Caco-2 (cell line): ENCODE measurements at regions of chr3 and their contacts with region 1.

Region 1: GRCh38 chr3:150763122-150763841 is at the start of gene SIAH2:
- DNase-seq: peak; percentile 91 to 92
- H3K4me3 ChIP-seq: peak within 1 kb of the TSS; percentile 95
- H3K4me3 Mint-ChIP-seq: peak within 1 kb of the TSS; percentile 89
- H3K27ac Mint-ChIP-seq: peak within 1 kb of the TSS; percentile 96
- H3K4me1 ChIP-seq: peaks cover 35% of the 10 kb centered on the region
- H3K4me1 Mint-ChIP-seq: peaks cover 7% of the 10 kb centered on the region
- H3K27me3 ChIP-seq: no peaks in the 10 kb centered on the region
- H3K27me3 Mint-ChIP-seq: no peaks in the 10 kb centered on the region
- CTCF ChIP-seq: no peak
- total RNA-seq, gene SIAH2: 25.6 and 31.8 TPM in 2 replicates

Region 2: GRCh38 chr3:150703299-150704134 is 59.8 kb before region 1 on chr3 and contains the start of gene ERICH6:
- CTCF ChIA-PET with region 1: interaction called, 3 read pairs
- POLR2A ChIA-PET with region 1: interaction called, 18 read pairs
- intact Hi-C with region 1: no loop called
- DNase-seq: peak; percentile 90 to 93
- H3K4me3 ChIP-seq: peak within 1 kb of the TSS; percentile 52
- H3K4me3 Mint-ChIP-seq: peak within 1 kb of the TSS; percentile 95
- H3K27ac Mint-ChIP-seq: peak within 1 kb of the TSS; percentile 96
- H3K4me1 ChIP-seq: no peaks in the 10 kb centered on the region
- H3K4me1 Mint-ChIP-seq: no peaks in the 10 kb centered on the region
- H3K27me3 ChIP-seq: no peaks in the 10 kb centered on the region
- H3K27me3 Mint-ChIP-seq: peaks cover 3% of the 10 kb centered on the region
- CTCF ChIP-seq: no peak
- total RNA-seq, gene ERICH6: not detected in 2 replicates

Region 3: DNA sequence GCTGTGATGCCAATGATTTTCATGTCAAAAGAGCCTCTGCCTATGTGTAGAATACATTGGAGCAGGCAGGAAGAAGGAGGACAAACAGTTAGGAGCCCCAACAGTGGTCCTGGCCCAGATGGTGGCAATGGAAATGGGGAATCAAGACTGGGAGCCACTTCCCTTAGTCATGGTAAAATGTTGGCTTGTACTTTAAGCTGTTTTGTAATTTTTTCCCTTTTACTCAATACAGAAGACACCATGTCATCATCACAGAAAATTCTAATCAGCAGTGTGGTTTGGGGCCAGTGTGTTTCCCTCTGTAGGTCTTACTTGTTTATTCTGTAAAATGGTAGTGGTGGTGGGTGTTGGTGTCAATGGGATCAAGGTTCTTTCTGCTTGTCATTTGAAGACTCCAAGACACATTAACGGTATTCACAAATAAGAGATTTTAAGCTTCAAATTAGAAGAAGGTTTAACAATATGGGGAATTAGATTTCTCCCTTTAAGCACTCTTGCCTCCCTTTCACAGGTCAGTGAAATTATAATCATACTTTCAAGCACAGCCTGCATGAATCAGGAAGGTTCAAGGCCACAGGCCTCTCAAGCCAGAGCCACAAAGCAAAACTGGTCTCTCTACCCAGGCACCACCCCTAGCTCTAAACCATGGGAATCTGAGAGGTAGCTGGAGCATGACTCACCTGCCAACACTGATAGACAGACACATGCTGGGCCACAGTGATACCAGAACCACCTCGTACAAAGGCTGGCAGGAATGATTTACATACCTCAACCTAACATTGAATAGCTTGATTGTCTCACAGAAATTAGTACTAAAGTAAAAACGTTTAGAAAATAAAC is 25.2 kb before region 1 on chr3:
- CTCF ChIA-PET with region 1: no interaction called
- POLR2A ChIA-PET with region 1: no interaction called
- intact Hi-C with region 1: loop called (anchors 1 kb)
- DNase-seq: no peak
- H3K4me3 ChIP-seq: no peak overlapping the region
- H3K4me3 Mint-ChIP-seq: no peak overlapping the region
- H3K27ac Mint-ChIP-seq: peak overlapping the region; percentile 56
- H3K4me1 ChIP-seq: peaks cover 41% of the 10 kb centered on the region
- H3K4me1 Mint-ChIP-seq: peaks cover 33% of the 10 kb centered on the region
- H3K27me3 ChIP-seq: no peaks in the 10 kb centered on the region
- H3K27me3 Mint-ChIP-seq: no peaks in the 10 kb centered on the region
- CTCF ChIP-seq: no peak

Region 4: DNA sequence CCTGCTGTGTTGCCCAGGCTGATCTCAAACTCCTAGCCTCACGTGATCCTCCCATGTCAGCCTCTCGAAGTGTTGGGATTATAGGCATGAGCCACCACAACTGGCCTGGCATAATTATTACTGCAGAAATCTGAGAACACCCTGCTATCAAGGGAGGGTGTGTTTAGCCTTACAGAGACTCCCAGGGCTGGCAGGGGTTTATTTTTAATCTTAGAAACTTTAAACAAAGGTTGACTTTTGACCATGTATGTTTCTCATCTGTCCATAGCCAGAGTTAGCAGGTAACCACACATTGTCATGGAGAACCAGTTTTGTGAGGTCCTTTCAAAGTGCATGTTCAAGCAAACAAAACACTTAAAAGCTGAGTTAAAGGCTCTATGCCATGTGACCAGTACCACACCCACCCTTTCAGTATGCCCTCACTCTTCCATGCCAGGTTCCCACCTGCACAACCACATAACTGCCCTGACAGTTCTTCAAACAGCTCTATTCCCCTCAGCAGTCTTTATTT is 11.5 kb before region 1 on chr3:
- CTCF ChIA-PET with region 1: interaction called, 3 read pairs
- POLR2A ChIA-PET with region 1: interaction called, 4 read pairs
- intact Hi-C with region 1: loop called (anchors 1 kb)
- DNase-seq: peak in 1 of 2 experiments; percentile 44
- H3K4me3 ChIP-seq: no peak overlapping the region
- H3K4me3 Mint-ChIP-seq: no peak overlapping the region
- H3K27ac Mint-ChIP-seq: no peak overlapping the region
- H3K4me1 ChIP-seq: peaks cover 16% of the 10 kb centered on the region
- H3K4me1 Mint-ChIP-seq: peaks cover 10% of the 10 kb centered on the region
- H3K27me3 ChIP-seq: no peaks in the 10 kb centered on the region
- H3K27me3 Mint-ChIP-seq: no peaks in the 10 kb centered on the region
- CTCF ChIP-seq: no peak